ENCODE measurements at regions of chr13 and their contacts with region 1.

Region 1: GRCh38 chr13:50801087-50801931 is 42.2 kb downstream of the DLEU7 start:
- DNase-seq: peak; percentile 55 to 76
- H3K4me3 ChIP-seq: no peak overlapping the region
- H3K4me3 Mint-ChIP-seq: no peak overlapping the region
- H3K27ac Mint-ChIP-seq: no peak overlapping the region
- H3K4me1 ChIP-seq: no peaks in the 10 kb centered on the region
- H3K4me1 Mint-ChIP-seq: no peaks in the 10 kb centered on the region
- H3K27me3 ChIP-seq: no peaks in the 10 kb centered on the region
- H3K27me3 Mint-ChIP-seq: no peaks in the 10 kb centered on the region
- CTCF ChIP-seq: peak; percentile 74 to 82

Region 2: DNA sequence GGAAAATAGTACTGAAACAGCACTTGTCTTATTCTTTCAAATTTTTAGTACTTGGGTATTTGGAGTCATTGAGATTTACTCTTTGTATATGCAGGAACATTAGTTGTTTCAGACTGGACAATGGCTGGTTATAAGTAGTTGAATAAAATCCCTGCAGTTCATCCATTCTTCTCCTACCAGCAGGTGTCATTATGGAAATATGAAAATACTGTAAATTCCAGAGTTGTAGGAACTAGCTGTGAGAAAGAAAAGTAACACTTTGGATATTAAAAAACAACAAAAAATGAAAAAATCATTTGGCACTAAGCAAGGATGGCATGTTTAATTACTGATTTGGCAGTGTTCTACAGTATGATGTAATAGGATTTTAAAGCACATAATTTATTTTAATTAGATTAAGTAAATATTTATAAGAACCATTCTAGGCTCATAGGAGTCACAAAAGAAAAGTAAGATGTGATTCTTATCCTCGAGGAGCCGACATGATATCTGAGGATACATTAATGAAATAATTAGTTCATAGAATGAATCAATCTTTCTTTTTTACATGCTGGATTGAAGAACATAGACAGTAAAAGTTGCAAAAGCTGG is 630.8 kb before region 1 on chr13:
- CTCF ChIA-PET with region 1: no interaction called
- POLR2A ChIA-PET with region 1: no interaction called
- intact Hi-C with region 1: loop called (anchors 5 kb)
- DNase-seq: no peak
- H3K4me3 ChIP-seq: no peak overlapping the region
- H3K4me3 Mint-ChIP-seq: no peak overlapping the region
- H3K27ac Mint-ChIP-seq: no peak overlapping the region
- H3K4me1 ChIP-seq: no peaks in the 10 kb centered on the region
- H3K4me1 Mint-ChIP-seq: no peaks in the 10 kb centered on the region
- H3K27me3 ChIP-seq: no peaks in the 10 kb centered on the region
- H3K27me3 Mint-ChIP-seq: no peaks in the 10 kb centered on the region
- CTCF ChIP-seq: peak in 1 of 2 experiments; percentile 39

Region 3: DNA sequence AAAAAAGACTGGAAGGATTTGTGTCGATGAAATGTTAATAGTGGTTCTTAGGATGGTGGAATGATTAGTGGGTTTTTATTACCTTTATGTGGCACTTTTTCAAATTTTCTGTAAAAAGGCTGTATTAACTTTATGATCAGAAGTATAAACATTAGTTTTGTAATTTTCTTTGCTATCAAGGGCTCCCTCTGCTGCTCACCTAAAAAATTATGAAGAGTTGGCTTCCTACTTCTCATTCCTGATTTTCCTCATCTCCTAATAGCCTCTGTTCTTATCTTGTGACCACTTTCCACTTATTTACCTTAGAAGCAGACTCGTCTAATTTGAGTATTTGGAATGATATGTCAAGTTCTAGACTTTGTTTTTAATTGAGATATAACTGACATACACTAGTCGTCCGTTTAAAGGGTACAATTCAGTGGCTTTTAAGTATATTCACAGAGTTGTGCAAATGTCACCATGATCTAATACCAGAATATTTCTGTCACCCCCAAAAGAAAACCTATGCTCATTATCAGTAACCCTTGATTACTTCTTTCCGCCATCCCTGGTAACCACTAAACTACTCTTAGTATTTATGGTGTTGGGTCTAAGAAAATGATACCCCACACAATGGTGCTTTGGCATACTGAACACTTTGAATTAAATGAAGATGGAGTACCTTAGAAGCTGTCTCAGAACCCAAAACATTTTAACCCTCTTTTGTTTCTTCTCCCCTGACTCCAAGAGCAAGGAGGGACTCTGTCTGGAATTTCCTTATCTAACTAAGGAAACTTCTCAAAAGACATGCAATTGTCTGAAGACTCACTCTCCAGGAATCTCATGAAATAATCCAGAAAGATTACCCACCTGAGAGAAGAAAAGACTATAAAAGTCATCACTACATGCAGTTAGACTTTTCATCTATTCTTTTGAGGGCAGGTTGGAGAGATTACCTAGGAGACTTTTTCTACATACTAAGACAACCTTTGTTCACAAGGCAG is 269.1 kb before region 1 on chr13:
- CTCF ChIA-PET with region 1: no interaction called
- POLR2A ChIA-PET with region 1: no interaction called
- intact Hi-C with region 1: loop called (anchors 5 kb)
- DNase-seq: peak in 1 of 2 experiments; percentile 25
- H3K4me3 ChIP-seq: no peak overlapping the region
- H3K4me3 Mint-ChIP-seq: no peak overlapping the region
- H3K27ac Mint-ChIP-seq: no peak overlapping the region
- H3K4me1 ChIP-seq: peaks cover 7% of the 10 kb centered on the region
- H3K4me1 Mint-ChIP-seq: peaks cover 24% of the 10 kb centered on the region
- H3K27me3 ChIP-seq: no peaks in the 10 kb centered on the region
- H3K27me3 Mint-ChIP-seq: no peaks in the 10 kb centered on the region
- CTCF ChIP-seq: peak; percentile 36 to 50

Region 4: DNA sequence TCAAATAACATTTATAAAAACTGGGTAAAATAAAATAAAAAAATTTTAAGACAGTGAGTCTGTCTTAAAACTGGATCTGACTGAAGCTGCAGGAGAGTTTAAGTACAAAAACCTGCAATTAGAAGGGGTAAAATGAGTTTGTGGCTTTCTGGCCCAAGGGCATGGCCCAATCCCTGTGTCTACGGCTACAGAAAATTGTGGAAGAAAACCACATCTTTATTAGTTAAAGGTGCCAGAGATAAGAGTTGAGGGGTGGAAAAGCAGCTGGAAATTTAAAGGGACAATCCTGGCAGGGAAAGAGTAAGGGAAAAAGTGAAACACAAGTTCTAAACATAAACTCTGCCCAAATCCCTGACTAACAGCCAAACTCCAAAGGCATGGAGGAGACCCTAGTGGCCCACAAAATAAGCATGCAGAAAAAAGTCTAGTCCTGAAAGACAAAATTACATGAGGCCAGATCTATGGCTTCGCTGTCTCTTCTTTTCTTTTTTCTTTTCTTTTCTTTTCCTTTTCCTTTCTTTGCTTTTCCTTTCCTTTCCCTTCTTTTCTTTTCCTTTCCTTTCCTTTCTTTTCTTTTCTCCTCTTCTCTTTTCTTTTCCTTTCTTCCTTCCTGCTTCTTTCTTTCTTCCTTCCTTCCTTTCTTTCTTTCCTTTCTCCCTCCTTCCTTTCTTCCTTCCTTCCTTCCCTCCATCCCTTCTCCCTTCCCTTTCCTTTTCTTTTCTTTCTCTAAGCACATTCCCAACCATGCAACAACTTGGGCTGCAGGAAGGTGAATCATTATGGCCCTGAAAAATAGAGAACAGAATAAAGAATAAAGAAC is 65.7 kb after region 1 on chr13:
- CTCF ChIA-PET with region 1: no interaction called
- POLR2A ChIA-PET with region 1: no interaction called
- intact Hi-C with region 1: no loop called
- DNase-seq: no peak
- H3K4me3 ChIP-seq: no peak overlapping the region
- H3K4me3 Mint-ChIP-seq: no peak overlapping the region
- H3K27ac Mint-ChIP-seq: no peak overlapping the region
- H3K4me1 ChIP-seq: no peaks in the 10 kb centered on the region
- H3K4me1 Mint-ChIP-seq: no peaks in the 10 kb centered on the region
- H3K27me3 ChIP-seq: no peaks in the 10 kb centered on the region
- H3K27me3 Mint-ChIP-seq: peaks cover 11% of the 10 kb centered on the region
- CTCF ChIP-seq: no peak

Region 5: GRCh38 chr13:50898338-50898737 is 97.0 kb after region 1 on chr13:
- CTCF ChIA-PET with region 1: no interaction called
- POLR2A ChIA-PET with region 1: no interaction called
- intact Hi-C with region 1: no loop called
- DNase-seq: no peak
- H3K4me3 ChIP-seq: no peak overlapping the region
- H3K4me3 Mint-ChIP-seq: no peak overlapping the region
- H3K27ac Mint-ChIP-seq: no peak overlapping the region
- H3K4me1 ChIP-seq: no peaks in the 10 kb centered on the region
- H3K4me1 Mint-ChIP-seq: no peaks in the 10 kb centered on the region
- H3K27me3 ChIP-seq: no peaks in the 10 kb centered on the region
- H3K27me3 Mint-ChIP-seq: peaks cover 15% of the 10 kb centered on the region
- CTCF ChIP-seq: no peak

Region 6: DNA sequence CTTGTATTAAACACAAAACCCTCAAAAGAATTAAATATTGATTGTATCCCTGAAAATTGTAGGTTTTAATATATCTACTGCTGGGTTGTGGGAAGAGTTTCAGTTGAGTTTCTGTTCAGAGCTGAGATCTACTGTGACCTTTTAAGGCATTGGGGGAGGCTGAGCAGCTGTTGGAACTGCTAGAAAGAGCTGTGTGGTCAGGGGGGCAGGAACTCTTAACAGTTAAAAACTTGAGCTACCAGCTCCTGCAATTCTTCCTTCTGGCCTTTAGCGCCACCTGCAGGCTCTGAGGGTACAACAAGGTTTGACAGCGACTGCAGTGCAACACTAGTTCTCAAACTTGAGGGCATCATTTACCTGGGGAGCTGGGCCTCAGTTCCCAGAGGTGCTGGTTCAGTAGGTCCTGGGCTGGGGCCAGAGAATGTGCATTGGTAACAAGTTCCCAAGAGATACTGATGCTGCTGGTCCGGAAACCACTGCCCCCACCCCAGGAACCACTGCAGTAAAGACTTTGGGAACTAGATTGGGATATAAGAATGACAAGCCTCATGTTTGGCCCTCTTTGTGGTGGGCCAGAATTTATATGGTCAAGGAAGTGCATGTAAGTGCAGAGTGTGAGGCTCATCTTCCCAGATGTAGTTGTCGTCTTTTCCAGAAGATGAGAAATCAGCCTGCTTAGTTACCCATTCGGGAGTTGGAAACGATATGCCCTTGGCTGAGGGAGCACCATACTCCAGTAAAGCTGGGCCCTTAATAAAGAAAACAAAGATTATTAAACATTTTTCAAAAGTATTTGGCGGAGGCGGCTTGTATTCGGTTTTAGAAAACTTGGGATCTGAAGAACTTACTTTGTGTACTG is 110.9 kb after region 1 on chr13:
- CTCF ChIA-PET with region 1: interaction called, 4 read pairs
- POLR2A ChIA-PET with region 1: no interaction called
- intact Hi-C with region 1: loop called (anchors 2 kb)
- DNase-seq: peak; percentile 87 to 89
- H3K4me3 ChIP-seq: no peak overlapping the region
- H3K4me3 Mint-ChIP-seq: peak overlapping the region; percentile 55
- H3K27ac Mint-ChIP-seq: peak overlapping the region; percentile 55
- H3K4me1 ChIP-seq: peaks cover 13% of the 10 kb centered on the region
- H3K4me1 Mint-ChIP-seq: peaks cover 25% of the 10 kb centered on the region
- H3K27me3 ChIP-seq: no peaks in the 10 kb centered on the region
- H3K27me3 Mint-ChIP-seq: no peaks in the 10 kb centered on the region
- CTCF ChIP-seq: peak; percentile 88 to 92

Region 7: DNA sequence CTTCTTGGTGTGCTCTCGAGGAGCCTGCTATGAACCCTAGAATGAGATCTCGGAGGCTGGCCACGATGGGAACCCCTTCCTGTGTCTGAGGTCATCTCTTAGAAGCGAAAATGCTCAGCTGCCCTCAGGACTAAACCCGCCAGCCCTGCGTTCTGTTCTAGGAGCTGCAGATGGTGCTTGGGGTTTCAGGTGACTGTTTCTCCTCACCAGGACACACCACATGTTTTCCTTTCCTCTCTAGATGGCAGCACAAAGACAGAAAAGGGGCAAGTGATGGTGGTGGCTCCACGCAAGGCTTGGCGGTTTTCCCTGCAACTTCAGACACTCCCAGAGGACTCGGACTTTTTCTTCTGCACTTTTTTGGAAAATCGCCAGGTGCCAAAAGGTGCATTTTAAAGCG is 168.4 kb after region 1 on chr13:
- CTCF ChIA-PET with region 1: no interaction called
- POLR2A ChIA-PET with region 1: no interaction called
- intact Hi-C with region 1: no loop called
- DNase-seq: peak; percentile 49 to 57
- H3K4me3 ChIP-seq: no peak overlapping the region
- H3K4me3 Mint-ChIP-seq: no peak overlapping the region
- H3K27ac Mint-ChIP-seq: no peak overlapping the region
- H3K4me1 ChIP-seq: no peaks in the 10 kb centered on the region
- H3K4me1 Mint-ChIP-seq: no peaks in the 10 kb centered on the region
- H3K27me3 ChIP-seq: no peaks in the 10 kb centered on the region
- H3K27me3 Mint-ChIP-seq: no peaks in the 10 kb centered on the region
- CTCF ChIP-seq: peak; percentile 20 to 55

Region 8: GRCh38 chr13:50989476-50989875 is 188.2 kb after region 1 on chr13:
- CTCF ChIA-PET with region 1: no interaction called
- POLR2A ChIA-PET with region 1: no interaction called
- intact Hi-C with region 1: no loop called
- DNase-seq: peak in 1 of 2 experiments; percentile 25
- H3K4me3 ChIP-seq: no peak overlapping the region
- H3K4me3 Mint-ChIP-seq: no peak overlapping the region
- H3K27ac Mint-ChIP-seq: no peak overlapping the region
- H3K4me1 ChIP-seq: peaks cover 39% of the 10 kb centered on the region
- H3K4me1 Mint-ChIP-seq: no peaks in the 10 kb centered on the region
- H3K27me3 ChIP-seq: no peaks in the 10 kb centered on the region
- H3K27me3 Mint-ChIP-seq: no peaks in the 10 kb centered on the region
- CTCF ChIP-seq: peak; percentile 19 to 47

Measured in Caco-2 (cell line).